ENCODE measurements at regions of chr11 and their contacts with region 1.

Region 1: DNA sequence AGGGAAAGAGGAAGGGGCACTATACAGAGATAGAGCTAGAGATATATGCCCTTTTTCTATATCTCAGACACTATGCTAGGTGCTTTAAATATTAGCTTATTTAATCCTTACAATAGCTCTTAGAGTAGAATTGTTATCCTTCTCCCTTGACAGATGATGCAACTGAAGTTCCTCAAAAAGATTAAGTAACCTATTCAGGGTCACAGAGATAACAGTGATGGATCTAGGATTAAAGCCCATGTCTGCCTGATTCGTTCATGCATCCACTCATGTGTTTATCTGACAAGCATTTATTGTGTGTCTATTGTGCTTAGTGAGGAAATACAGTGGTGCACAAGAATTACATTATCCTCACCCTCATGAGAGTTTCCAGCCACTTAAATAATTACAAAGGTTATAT is 8.7 kb downstream of the CCDC83 start:
- DNase-seq: peak; percentile 15 to 37 (median 26)
- H3K4me3 ChIP-seq: no peak overlapping the region
- H3K4me3 Mint-ChIP-seq: no peak overlapping the region
- H3K27ac ChIP-seq: no peak overlapping the region
- H3K27ac Mint-ChIP-seq: no peak overlapping the region
- H3K4me1 ChIP-seq: peaks cover 0 to 4% of the 10 kb centered on the region in 2 donors
- H3K4me1 Mint-ChIP-seq: peaks cover 4% of the 10 kb centered on the region
- H3K27me3 ChIP-seq: no peaks in the 10 kb centered on the region
- H3K27me3 Mint-ChIP-seq: peaks cover 0 to 2% (median 0%) of the 10 kb centered on the region in 3 donors
- CTCF ChIP-seq: no peak

Region 2: DNA sequence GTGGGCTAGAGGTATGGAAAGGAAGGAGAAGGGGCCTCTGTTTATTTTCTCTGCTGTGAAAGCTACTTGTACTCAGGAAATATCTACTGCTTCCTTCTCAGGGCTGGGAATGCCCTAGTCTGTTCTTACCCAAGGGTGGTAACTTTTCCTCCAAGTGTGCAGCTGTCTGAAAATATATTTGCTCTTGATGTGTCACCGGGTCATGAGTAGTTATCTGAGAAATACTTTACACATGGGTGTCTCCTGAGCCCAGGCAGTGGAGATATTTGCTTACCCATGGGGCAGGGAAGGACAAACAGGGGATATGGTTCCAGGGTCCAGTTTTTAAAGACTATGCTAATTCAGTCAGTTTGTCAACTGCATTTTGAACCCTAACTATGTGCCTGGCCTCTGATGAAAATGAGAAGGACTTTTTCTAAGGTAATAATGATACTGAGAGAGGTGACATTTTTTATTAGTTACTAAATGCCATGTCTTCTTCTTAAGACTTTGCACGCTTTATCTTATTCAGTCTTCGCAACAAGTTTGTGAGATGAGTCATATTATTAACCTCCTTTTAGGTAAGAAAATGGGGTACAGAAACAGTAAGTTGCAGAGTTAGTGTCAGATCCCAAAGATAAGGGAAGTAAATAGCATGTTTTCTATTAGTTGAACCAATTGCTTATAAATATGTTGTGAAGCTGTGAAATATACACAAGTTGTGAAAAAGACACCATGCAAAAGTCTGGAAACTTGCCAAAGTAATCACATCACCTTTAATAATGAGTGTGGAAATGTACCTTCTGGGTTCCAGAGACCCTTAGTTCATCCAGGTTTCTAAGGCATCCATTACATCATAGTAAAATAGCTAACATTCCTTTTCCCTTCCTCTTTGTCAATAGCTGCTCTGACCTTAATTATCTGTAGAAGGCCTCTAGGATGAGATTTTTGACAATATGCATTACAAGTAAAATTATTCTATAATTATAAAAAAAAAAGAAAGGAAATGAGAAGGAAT is 75.7 kb before region 1 on chr11:
- intact Hi-C with region 1: no loop called
- DNase-seq: no peak
- H3K4me3 ChIP-seq: no peak overlapping the region
- H3K4me3 Mint-ChIP-seq: no peak overlapping the region
- H3K27ac ChIP-seq: no peak overlapping the region
- H3K27ac Mint-ChIP-seq: no peak overlapping the region
- H3K4me1 ChIP-seq: no peaks in the 10 kb centered on the region
- H3K4me1 Mint-ChIP-seq: peaks cover 3% of the 10 kb centered on the region
- H3K27me3 ChIP-seq: no peaks in the 10 kb centered on the region
- H3K27me3 Mint-ChIP-seq: peaks cover 0 to 2% (median 0%) of the 10 kb centered on the region in 3 donors
- CTCF ChIP-seq: no peak

Region 3: DNA sequence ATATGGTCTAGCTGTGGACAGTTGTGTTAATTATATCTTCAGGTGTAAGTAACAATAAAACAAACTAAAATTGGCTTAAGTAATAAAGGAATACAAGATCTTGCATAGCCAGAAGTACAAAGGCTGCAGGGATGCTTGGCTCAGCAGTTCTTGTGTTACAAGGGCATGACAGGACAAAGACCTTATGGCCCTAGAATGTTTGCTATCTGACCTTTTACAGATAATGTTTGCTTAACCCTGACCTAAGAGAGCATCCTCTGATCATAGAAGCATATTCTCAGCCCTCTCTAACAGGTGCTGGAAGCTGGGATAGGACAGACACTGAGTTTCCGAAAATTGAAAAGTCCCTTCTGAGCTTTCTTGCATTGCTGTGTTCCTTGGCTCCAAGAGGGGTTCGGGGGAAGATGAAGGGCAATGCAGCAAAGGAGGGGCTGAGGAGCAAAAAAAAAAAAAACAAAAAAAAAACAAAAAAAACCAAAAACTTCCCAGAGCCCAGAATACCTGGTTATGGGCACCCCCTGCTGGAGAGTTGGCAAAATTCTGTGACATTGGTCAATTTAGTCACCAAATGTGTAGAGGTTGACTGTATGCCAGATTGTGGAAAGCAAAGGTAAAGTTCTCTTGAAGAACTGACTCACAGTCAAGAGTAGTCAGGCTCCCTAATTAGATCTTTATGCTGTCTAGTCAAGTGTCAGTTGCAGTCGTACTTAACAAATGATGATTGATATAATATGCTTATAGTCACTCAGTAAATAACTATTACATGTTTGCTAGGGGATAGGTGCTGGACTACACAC is 427.8 kb after region 1 on chr11:
- intact Hi-C with region 1: loop called (anchors 5 to 10 kb)
- DNase-seq: peak; percentile 21 to 48 (median 35)
- H3K4me3 ChIP-seq: no peak overlapping the region
- H3K4me3 Mint-ChIP-seq: no peak overlapping the region
- H3K27ac ChIP-seq: no peak overlapping the region
- H3K27ac Mint-ChIP-seq: no peak overlapping the region
- H3K4me1 ChIP-seq: no peaks in the 10 kb centered on the region
- H3K4me1 Mint-ChIP-seq: peaks cover 7% of the 10 kb centered on the region
- H3K27me3 ChIP-seq: no peaks in the 10 kb centered on the region
- H3K27me3 Mint-ChIP-seq: peaks cover 0 to 3% (median 2%) of the 10 kb centered on the region in 3 donors
- CTCF ChIP-seq: peak; percentile 82

Measured in CD14-positive monocyte (primary cell).